Heart left ventricle (tissue), 16 donors: ENCODE measurements at regions of chr2 and their contacts with region 1.

Region 1: DNA sequence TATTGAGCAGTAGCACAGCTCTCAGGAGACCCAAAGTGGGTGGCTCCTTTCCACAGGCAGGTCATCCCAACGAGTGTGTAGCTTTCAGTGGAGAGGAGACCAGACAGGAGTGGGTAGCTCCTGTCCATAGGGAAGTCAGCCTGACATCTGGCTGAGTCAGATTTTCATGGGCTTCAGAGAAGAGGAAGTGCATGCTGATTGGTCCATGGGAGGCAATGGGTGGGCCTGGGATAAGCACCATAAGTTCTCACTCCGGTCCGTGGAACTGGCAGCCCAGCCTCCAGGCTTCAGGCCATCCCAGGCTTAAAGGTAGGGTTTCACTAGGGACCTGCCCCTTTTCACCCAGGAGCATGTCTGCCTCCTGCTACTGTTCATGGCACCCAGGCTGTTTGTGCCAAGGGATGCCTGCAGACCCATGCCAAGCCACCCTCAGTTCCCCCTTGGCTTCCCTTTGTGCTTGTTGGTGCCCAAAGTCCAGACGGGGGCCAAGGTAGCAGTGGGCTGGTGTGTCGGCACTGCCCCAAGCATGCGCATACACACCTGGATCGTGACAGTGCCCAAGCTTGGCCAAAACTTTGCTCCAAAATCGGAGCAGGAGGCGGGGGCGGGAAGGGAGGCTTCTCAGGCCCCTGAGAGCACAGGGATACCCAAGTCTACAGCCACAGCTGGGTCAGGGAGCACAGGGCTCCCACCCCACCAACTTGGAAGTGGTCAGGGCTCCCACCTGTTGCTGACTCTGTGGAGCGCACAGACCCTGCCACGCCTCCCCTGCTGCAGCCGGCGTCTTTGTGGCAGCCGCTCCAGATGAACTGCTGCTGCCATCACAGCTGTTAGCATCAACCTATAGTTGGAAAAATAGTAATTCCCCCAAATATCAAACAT is 26.4 kb downstream of the MARCHF7 start:
- DNase-seq: peak in 1 of 5 donors; percentile 17
- ATAC-seq: peak; percentile 17 to 61 (median 42)
- H3K4me3 ChIP-seq: no peak overlapping the region
- H3K27ac ChIP-seq: peak overlapping the region in 1 of 12 donors; percentile 45
- H3K4me1 ChIP-seq: peaks cover 0 to 38% (median 18%) of the 10 kb centered on the region in 12 donors
- H3K27me3 ChIP-seq: no peaks in the 10 kb centered on the region
- CTCF ChIP-seq: no peak
- POLR2A ChIP-seq: no peak

Region 2: DNA sequence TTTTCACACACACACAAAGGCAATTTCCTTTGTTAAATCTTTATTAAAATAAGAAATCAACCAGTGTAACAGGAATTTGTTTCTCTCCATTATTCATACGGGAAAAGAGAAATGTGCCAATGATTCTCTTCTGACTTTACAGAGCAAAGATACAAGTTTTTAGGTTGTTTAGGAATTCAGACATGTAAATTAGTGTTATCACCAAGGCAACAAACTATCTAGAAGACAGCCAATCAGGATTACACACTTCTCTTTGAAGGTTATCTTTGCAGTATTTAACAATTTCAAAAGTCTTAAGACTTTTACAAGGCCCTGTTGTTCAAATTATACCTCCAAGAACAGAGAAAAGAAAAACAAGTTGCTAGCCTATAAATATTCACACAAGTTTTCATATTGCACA is 44.8 kb after region 1 on chr2:
- intact Hi-C with region 1: loop called in 1 of 10 experiments (anchors 5 kb)
- DNase-seq: no peak
- ATAC-seq: no peak
- H3K4me3 ChIP-seq: no peak overlapping the region
- H3K27ac ChIP-seq: no peak overlapping the region
- H3K4me1 ChIP-seq: peaks cover 0 to 27% (median 0%) of the 10 kb centered on the region in 12 donors
- H3K27me3 ChIP-seq: no peaks in the 10 kb centered on the region
- CTCF ChIP-seq: no peak
- POLR2A ChIP-seq: no peak